ENCODE measurements at regions of chr2 and their contacts with region 1.

Region 1: DNA sequence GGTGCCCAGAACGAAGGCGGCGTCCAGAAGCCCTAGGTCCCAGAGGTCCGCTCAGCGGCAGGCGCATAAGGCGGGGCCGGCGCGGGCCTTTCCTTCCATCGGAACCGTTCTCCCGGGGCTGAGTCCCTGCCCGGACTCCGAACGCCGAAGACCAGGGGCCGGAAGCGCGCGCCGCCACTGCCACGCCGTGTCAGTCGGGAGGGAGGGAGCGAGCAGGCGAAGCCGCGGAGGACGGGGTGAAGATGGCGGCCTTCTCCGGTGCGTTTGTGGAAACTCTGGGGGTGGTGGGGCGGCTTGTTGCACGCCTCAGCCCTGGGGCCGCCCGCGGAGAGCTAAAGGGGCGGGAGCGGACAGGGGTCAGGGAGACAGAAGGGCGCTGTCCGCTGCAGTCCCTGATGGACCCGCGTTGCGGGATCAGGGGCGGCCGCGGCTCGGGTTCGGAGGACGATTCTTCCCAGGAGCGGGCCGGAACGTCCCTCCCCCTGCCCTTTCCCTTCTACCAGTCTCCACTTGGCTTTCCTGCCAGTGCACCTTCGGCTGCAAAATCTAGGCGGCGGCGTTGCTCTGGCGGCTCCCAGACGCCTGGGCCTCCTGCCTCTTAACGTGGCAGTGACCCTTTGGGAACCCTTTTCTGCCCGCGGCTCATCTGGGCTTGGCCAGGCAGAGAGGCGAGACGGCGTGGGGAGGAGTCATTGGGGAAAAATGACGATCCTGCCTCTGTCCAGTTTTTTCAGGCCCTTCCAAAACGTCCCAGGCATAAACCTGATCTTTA is at the start of gene DDX1:
- DNase-seq: peak; percentile 11 to 90
- H3K4me3 ChIP-seq: peak within 1 kb of the TSS; percentile 73 to 95
- H3K27ac ChIP-seq: peak within 1 kb of the TSS; percentile 89 to 91
- H3K4me1 ChIP-seq: peaks cover 0 to 20% of the 10 kb centered on the region in 2 donors
- H3K27me3 ChIP-seq: no peaks in the 10 kb centered on the region
- CTCF ChIP-seq: no peak
- total RNA-seq, gene DDX1: 21.5 TPM

Region 2: GRCh38 chr2:14560366-14561115 is 1031.3 kb before region 1 on chr2:
- intact Hi-C with region 1: no loop called
- DNase-seq: no peak
- H3K4me3 ChIP-seq: no peak overlapping the region
- H3K27ac ChIP-seq: no peak overlapping the region
- H3K4me1 ChIP-seq: no peaks in the 10 kb centered on the region
- H3K27me3 ChIP-seq: no peaks in the 10 kb centered on the region
- CTCF ChIP-seq: no peak

Region 3: DNA sequence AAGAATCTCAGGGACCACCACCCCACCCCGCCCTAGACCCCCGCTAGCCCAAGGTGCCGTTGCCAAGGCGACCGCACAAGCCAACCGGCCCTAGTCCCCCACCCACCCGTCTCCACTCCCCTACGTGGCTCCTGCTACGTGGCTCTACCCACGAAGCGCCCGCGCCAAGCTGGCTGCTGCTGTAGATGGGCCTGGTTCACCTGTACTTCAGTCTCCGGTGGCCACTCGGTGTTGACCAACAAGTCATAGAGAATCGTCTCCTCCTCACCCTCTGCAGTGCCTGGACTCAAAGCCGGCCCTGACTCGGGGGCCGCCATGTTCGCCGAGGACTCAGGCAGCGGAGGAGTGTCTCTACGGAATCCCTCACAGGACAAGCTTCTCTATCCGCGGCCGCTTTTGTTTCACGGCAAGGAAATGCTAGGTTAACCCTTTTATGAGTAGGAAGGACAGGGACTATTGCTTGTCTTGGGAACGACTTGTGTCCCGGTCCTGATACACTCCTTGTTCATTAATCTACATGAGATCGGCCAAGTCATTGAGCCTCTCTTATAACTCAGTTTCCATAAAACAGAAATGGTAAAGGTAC is 30.8 kb before region 1 on chr2 and contains the start of gene NBAS:
- intact Hi-C with region 1: loop called (anchors 1 kb)
- DNase-seq: peak; percentile 38 to 91
- H3K4me3 ChIP-seq: peak within 1 kb of the TSS; percentile 62 to 78
- H3K27ac ChIP-seq: peak within 1 kb of the TSS; percentile 66 to 72
- H3K4me1 ChIP-seq: no peaks in the 10 kb centered on the region
- H3K27me3 ChIP-seq: no peaks in the 10 kb centered on the region
- CTCF ChIP-seq: no peak
- total RNA-seq, gene NBAS: 37.1 TPM